Activated naive CD4-positive, alpha-beta T cell treated with anti-CD3 and anti-CD28 coated beads for 36 hours (primary cell): ENCODE measurements at regions of chr13 and their contacts with region 1.

Region 1: GRCh38 chr13:48037346-48038173 is at the start of gene NUDT15:
- DNase-seq: peak; percentile 96
- H3K4me3 Mint-ChIP-seq: peak within 1 kb of the TSS; percentile 95
- H3K27ac Mint-ChIP-seq: peak within 1 kb of the TSS; percentile 95
- H3K4me1 Mint-ChIP-seq: peaks cover 42% of the 10 kb centered on the region
- H3K27me3 Mint-ChIP-seq: no peaks in the 10 kb centered on the region
- total RNA-seq, gene NUDT15: 28.3 to 29.2 TPM

Region 2: GRCh38 chr13:47794963-47795362 is 242.6 kb before region 1 on chr13:
- CTCF ChIA-PET with region 1: no interaction called
- intact Hi-C with region 1: loop called (anchors 10 kb)
- DNase-seq: no peak
- H3K4me3 Mint-ChIP-seq: no peak overlapping the region
- H3K27ac Mint-ChIP-seq: no peak overlapping the region
- H3K4me1 Mint-ChIP-seq: no peaks in the 10 kb centered on the region
- H3K27me3 Mint-ChIP-seq: no peaks in the 10 kb centered on the region

Region 3: GRCh38 chr13:48066310-48066989 is 28.9 kb after region 1 on chr13:
- CTCF ChIA-PET with region 1: no interaction called
- intact Hi-C with region 1: loop called (anchors 1 kb)
- DNase-seq: peak; percentile 90
- H3K4me3 Mint-ChIP-seq: no peak overlapping the region
- H3K27ac Mint-ChIP-seq: peak overlapping the region; percentile 91
- H3K4me1 Mint-ChIP-seq: peaks cover 13% of the 10 kb centered on the region
- H3K27me3 Mint-ChIP-seq: no peaks in the 10 kb centered on the region

Region 4: DNA sequence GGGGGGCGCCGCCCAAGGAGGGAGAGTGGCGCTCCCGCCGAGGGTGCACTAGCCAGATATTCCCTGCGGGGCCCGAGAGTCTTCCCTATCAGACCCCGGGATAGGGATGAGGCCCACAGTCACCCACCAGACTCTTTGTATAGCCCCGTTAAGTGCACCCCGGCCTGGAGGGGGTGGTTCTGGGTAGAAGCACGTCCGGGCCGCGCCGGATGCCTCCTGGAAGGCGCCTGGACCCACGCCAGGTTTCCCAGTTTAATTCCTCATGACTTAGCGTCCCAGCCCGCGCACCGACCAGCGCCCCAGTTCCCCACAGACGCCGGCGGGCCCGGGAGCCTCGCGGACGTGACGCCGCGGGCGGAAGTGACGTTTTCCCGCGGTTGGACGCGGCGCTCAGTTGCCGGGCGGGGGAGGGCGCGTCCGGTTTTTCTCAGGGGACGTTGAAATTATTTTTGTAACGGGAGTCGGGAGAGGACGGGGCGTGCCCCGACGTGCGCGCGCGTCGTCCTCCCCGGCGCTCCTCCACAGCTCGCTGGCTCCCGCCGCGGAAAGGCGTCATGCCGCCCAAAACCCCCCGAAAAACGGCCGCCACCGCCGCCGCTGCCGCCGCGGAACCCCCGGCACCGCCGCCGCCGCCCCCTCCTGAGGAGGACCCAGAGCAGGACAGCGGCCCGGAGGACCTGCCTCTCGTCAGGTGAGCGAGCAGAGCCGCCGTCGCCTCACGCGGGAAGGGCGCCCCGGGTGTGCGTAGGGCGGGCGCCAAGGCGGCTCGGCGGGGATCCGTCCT is 266.0 kb after region 1 on chr13 and contains the start of gene RB1:
- CTCF ChIA-PET with region 1: interaction called, 5 read pairs
- intact Hi-C with region 1: loop called (anchors 1 kb)
- DNase-seq: peak; percentile 92
- H3K4me3 Mint-ChIP-seq: peak within 1 kb of the TSS; percentile 87
- H3K27ac Mint-ChIP-seq: peak within 1 kb of the TSS; percentile 97
- H3K4me1 Mint-ChIP-seq: peaks cover 23% of the 10 kb centered on the region
- H3K27me3 Mint-ChIP-seq: no peaks in the 10 kb centered on the region
- total RNA-seq, gene RB1: 25.1 to 25.6 TPM

Region 5: GRCh38 chr13:48580185-48580803 is 542.7 kb after region 1 on chr13:
- CTCF ChIA-PET with region 1: interaction called, 3 read pairs
- intact Hi-C with region 1: loop called (anchors 10 kb)
- DNase-seq: peak; percentile 88
- H3K4me3 Mint-ChIP-seq: no peak overlapping the region
- H3K27ac Mint-ChIP-seq: no peak overlapping the region
- H3K4me1 Mint-ChIP-seq: peaks cover 2% of the 10 kb centered on the region
- H3K27me3 Mint-ChIP-seq: peaks cover 6% of the 10 kb centered on the region